ENCODE measurements at regions of chr6 and their contacts with region 1.

Region 1: DNA sequence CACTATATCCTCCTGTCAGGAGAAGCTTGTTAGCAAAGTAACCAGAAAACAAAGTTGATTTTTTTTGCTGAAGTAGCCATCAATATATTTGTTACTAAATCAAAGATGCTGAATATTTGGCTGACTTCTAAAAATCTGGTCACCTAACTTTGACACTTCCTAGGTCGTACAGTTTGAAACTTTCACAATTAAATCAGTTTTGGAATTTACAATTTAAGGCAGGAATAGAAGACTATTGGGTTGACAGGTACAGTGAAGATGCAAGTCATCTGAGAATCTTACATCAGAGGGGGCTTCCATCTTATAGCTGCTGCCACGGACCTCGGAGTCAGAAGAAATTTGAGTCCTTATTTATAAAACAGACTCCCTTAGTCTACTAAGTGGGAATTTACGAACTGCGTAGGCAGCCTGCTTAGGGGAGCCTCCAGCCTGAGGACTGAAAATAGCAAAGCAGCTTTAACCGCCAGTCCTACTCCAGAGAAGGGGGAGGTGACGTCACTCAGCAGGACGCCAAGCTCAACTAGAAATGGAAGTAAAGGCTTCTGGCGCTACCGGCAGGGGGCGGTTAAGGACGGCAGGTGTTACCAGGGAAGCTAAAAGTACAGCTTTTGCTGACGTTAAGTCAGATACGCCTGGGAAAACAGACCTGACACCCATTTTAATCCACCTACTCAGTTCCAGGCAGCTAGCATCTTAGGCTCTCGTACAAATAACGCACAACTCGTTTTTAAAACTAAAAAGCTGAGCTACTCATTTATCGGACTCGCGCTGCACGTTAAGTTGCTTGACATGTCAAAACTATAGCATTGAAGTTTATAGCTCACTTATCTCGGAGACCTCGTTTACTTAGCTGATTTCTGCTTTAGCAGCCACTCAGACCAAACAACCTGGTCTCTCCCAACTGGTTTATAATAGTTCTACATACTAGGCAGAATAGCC is 61.1 kb upstream of the HFE start:
- DNase-seq: peak; percentile 97
- ATAC-seq: peak; percentile 42
- H3K4me3 Mint-ChIP-seq: peak overlapping the region; percentile 86
- H3K27ac Mint-ChIP-seq: peak overlapping the region; percentile 99
- H3K4me1 Mint-ChIP-seq: peaks cover 86% of the 10 kb centered on the region
- H3K27me3 Mint-ChIP-seq: peaks cover 3% of the 10 kb centered on the region

Region 2: GRCh38 chr6:25992413-25993037 is 33.6 kb before region 1 on chr6:
- CTCF ChIA-PET with region 1: interaction called, 19 read pairs
- POLR2A ChIA-PET with region 1: interaction called, 65 read pairs
- DNase-seq: peak; percentile 94
- ATAC-seq: peak; percentile 96
- H3K4me3 Mint-ChIP-seq: peak overlapping the region; percentile 96
- H3K27ac Mint-ChIP-seq: peak overlapping the region; percentile 96
- H3K4me1 Mint-ChIP-seq: peaks cover 29% of the 10 kb centered on the region
- H3K27me3 Mint-ChIP-seq: no peaks in the 10 kb centered on the region

Region 3: DNA sequence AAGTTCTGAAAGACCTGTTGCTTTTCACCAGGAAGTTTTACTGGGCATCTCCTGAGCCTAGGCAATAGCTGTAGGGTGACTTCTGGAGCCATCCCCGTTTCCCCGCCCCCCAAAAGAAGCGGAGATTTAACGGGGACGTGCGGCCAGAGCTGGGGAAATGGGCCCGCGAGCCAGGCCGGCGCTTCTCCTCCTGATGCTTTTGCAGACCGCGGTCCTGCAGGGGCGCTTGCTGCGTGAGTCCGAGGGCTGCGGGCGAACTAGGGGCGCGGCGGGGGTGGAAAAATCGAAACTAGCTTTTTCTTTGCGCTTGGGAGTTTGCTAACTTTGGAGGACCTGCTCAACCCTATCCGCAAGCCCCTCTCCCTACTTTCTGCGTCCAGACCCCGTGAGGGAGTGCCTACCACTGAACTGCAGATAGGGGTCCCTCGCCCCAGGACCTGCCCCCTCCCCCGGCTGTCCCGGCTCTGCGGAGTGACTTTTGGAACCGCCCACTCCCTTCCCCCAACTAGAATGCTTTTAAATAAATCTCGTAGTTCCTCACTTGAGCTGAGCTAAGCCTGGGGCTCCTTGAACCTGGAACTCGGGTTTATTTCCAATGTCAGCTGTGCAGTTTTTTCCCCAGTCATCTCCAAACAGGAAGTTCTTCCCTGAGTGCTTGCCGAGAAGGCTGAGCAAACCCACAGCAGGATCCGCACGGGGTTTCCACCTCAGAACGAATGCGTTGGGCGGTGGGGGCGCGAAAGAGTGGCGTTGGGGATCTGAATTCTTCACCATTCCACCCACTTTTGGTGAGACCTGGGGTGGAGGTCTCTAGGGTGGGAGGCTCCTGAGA is 61.3 kb after region 1 on chr6 and contains the start of gene HFE:
- CTCF ChIA-PET with region 1: interaction called, 10 read pairs
- POLR2A ChIA-PET with region 1: interaction called, 9 read pairs
- DNase-seq: peak; percentile 50
- ATAC-seq: peak; percentile 48
- H3K4me3 Mint-ChIP-seq: peak within 1 kb of the TSS; percentile 80
- H3K27ac Mint-ChIP-seq: peak within 1 kb of the TSS; percentile 70
- H3K4me1 Mint-ChIP-seq: peaks cover 60% of the 10 kb centered on the region
- H3K27me3 Mint-ChIP-seq: peaks cover 1% of the 10 kb centered on the region
- total RNA-seq, gene HFE: 4.3 TPM

Region 4: DNA sequence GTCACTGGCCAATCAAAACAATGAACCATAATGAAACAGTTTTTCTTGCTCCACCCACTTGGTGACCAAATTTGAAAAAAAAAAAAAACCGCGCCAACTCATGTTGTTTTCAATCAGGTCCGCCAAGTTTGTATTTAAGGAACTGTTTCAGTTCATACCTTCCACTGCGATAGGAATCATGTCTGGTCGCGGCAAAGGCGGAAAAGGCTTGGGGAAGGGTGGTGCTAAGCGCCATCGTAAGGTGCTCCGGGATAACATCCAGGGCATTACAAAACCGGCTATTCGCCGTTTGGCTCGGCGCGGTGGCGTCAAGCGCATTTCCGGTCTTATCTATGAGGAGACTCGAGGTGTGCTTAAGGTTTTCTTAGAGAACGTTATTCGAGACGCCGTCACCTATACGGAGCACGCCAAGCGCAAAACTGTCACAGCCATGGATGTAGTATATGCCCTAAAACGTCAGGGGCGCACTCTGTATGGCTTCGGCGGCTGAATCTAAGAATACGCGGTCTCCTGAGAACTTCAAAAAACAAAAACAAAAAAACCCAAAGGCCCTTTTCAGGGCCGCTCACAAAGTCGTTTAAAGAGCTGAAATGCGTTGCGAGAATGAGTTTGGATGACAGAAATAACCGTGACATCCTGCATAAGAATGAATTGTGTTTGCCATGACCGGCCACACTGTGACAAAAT is 77.8 kb after region 1 on chr6:
- CTCF ChIA-PET with region 1: interaction called, 3 read pairs
- POLR2A ChIA-PET with region 1: interaction called, 70 read pairs
- DNase-seq: peak; percentile 93
- ATAC-seq: peak; percentile 89
- H3K4me3 Mint-ChIP-seq: peak overlapping the region; percentile 85
- H3K27ac Mint-ChIP-seq: peak overlapping the region; percentile 98
- H3K4me1 Mint-ChIP-seq: peaks cover 26% of the 10 kb centered on the region
- H3K27me3 Mint-ChIP-seq: peaks cover 2% of the 10 kb centered on the region

Region 5: GRCh38 chr6:26249957-26250697 is 224.0 kb after region 1 on chr6:
- CTCF ChIA-PET with region 1: no interaction called
- POLR2A ChIA-PET with region 1: interaction called, 59 read pairs
- DNase-seq: peak; percentile 85
- ATAC-seq: peak; percentile 55
- H3K4me3 Mint-ChIP-seq: peak overlapping the region; percentile 84
- H3K27ac Mint-ChIP-seq: peak overlapping the region; percentile 100
- H3K4me1 Mint-ChIP-seq: peaks cover 30% of the 10 kb centered on the region
- H3K27me3 Mint-ChIP-seq: no peaks in the 10 kb centered on the region

Region 6: GRCh38 chr6:27838058-27838944 is 1812.1 kb after region 1 on chr6:
- CTCF ChIA-PET with region 1: no interaction called
- POLR2A ChIA-PET with region 1: interaction called, 51 read pairs
- DNase-seq: peak; percentile 92
- ATAC-seq: peak; percentile 78
- H3K4me3 Mint-ChIP-seq: no peak overlapping the region
- H3K27ac Mint-ChIP-seq: no peak overlapping the region
- H3K4me1 Mint-ChIP-seq: peaks cover 33% of the 10 kb centered on the region
- H3K27me3 Mint-ChIP-seq: no peaks in the 10 kb centered on the region

Measured in activated CD8-positive, alpha-beta T cell treated with anti-CD3 and anti-CD28 coated beads, Interleukin-2, amount 10 ng/mL, durations not matched to agents 7 days and 5 days (primary cell).